ENCODE measurements at regions of chr3 and their contacts with region 1.

Region 1: GRCh38 chr3:139427283-139427993 is 38.0 kb upstream of the COPB2 start:
- DNase-seq: no peak
- ATAC-seq: peak; percentile 78
- H3K4me3 Mint-ChIP-seq: no peak overlapping the region
- H3K27ac Mint-ChIP-seq: no peak overlapping the region
- H3K4me1 Mint-ChIP-seq: no peaks in the 10 kb centered on the region
- H3K27me3 Mint-ChIP-seq: no peaks in the 10 kb centered on the region

Region 2: GRCh38 chr3:138923531-138923994 is 503.9 kb before region 1 on chr3:
- CTCF ChIA-PET with region 1: no interaction called
- POLR2A ChIA-PET with region 1: no interaction called
- intact Hi-C with region 1: no loop called
- DNase-seq: peak; percentile 92
- ATAC-seq: peak; percentile 98
- H3K4me3 Mint-ChIP-seq: no peak overlapping the region
- H3K27ac Mint-ChIP-seq: no peak overlapping the region
- H3K4me1 Mint-ChIP-seq: no peaks in the 10 kb centered on the region
- H3K27me3 Mint-ChIP-seq: peaks cover 2% of the 10 kb centered on the region

Region 3: DNA sequence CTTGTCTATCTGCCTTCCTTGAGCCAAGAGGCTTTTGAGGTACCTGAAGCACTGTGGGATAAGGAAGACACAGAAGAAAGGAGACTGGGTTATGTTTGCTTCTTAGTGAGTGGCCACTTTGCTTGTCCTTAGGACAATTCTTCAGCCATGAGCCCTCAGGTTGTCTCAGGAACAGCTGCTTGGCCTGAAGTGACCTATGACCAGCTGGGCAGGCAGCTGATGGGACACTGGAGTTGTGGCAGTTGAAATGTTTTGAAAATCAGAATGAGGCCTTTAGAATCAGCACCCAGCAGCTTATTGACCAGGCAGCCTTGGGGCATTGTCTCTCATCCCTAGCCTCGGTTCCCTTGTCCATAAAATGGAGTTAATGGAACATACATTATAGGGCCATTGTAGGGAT is 11.8 kb after region 1 on chr3:
- CTCF ChIA-PET with region 1: interaction called, 13 read pairs
- POLR2A ChIA-PET with region 1: no interaction called
- intact Hi-C with region 1: no loop called
- DNase-seq: no peak
- ATAC-seq: no peak
- H3K4me3 Mint-ChIP-seq: no peak overlapping the region
- H3K27ac Mint-ChIP-seq: no peak overlapping the region
- H3K4me1 Mint-ChIP-seq: no peaks in the 10 kb centered on the region
- H3K27me3 Mint-ChIP-seq: no peaks in the 10 kb centered on the region

Region 4: GRCh38 chr3:139519998-139520737 is 92.7 kb after region 1 on chr3:
- CTCF ChIA-PET with region 1: no interaction called
- POLR2A ChIA-PET with region 1: no interaction called
- intact Hi-C with region 1: loop called (anchors 2 to 5 kb)
- DNase-seq: peak; percentile 56
- ATAC-seq: peak; percentile 49
- H3K4me3 Mint-ChIP-seq: no peak overlapping the region
- H3K27ac Mint-ChIP-seq: no peak overlapping the region
- H3K4me1 Mint-ChIP-seq: no peaks in the 10 kb centered on the region
- H3K27me3 Mint-ChIP-seq: no peaks in the 10 kb centered on the region

Region 5: GRCh38 chr3:139561959-139562676 is 134.7 kb after region 1 on chr3:
- CTCF ChIA-PET with region 1: no interaction called
- POLR2A ChIA-PET with region 1: no interaction called
- intact Hi-C with region 1: loop called (anchors 1 to 5 kb)
- DNase-seq: peak; percentile 17
- ATAC-seq: no peak
- H3K4me3 Mint-ChIP-seq: no peak overlapping the region
- H3K27ac Mint-ChIP-seq: no peak overlapping the region
- H3K4me1 Mint-ChIP-seq: no peaks in the 10 kb centered on the region
- H3K27me3 Mint-ChIP-seq: no peaks in the 10 kb centered on the region

Region 6: GRCh38 chr3:139588450-139588849 is 161.0 kb after region 1 on chr3:
- CTCF ChIA-PET with region 1: no interaction called
- POLR2A ChIA-PET with region 1: no interaction called
- intact Hi-C with region 1: no loop called
- DNase-seq: peak; percentile 7
- ATAC-seq: no peak
- H3K4me3 Mint-ChIP-seq: no peak overlapping the region
- H3K27ac Mint-ChIP-seq: no peak overlapping the region
- H3K4me1 Mint-ChIP-seq: no peaks in the 10 kb centered on the region
- H3K27me3 Mint-ChIP-seq: no peaks in the 10 kb centered on the region

Region 7: GRCh38 chr3:139935016-139935865 is 507.8 kb after region 1 on chr3 and contains the start of gene CLSTN2:
- CTCF ChIA-PET with region 1: no interaction called
- POLR2A ChIA-PET with region 1: no interaction called
- intact Hi-C with region 1: loop called (anchors 2 to 10 kb)
- DNase-seq: peak; percentile 69
- ATAC-seq: peak; percentile 70
- H3K4me3 Mint-ChIP-seq: no peak within 1 kb of the TSS
- H3K27ac Mint-ChIP-seq: no peak within 1 kb of the TSS
- H3K4me1 Mint-ChIP-seq: peaks cover 9% of the 10 kb centered on the region
- H3K27me3 Mint-ChIP-seq: peaks cover 45% of the 10 kb centered on the region
- total RNA-seq, gene CLSTN2: not detected

Region 8: GRCh38 chr3:140736863-140737460 is 1309.5 kb after region 1 on chr3:
- CTCF ChIA-PET with region 1: no interaction called
- POLR2A ChIA-PET with region 1: no interaction called
- intact Hi-C with region 1: loop called in 1 of 2 experiments (anchors 2 kb)
- DNase-seq: peak; percentile 34
- ATAC-seq: no peak
- H3K4me3 Mint-ChIP-seq: no peak overlapping the region
- H3K27ac Mint-ChIP-seq: no peak overlapping the region
- H3K4me1 Mint-ChIP-seq: no peaks in the 10 kb centered on the region
- H3K27me3 Mint-ChIP-seq: peaks cover 5% of the 10 kb centered on the region

Region 9: DNA sequence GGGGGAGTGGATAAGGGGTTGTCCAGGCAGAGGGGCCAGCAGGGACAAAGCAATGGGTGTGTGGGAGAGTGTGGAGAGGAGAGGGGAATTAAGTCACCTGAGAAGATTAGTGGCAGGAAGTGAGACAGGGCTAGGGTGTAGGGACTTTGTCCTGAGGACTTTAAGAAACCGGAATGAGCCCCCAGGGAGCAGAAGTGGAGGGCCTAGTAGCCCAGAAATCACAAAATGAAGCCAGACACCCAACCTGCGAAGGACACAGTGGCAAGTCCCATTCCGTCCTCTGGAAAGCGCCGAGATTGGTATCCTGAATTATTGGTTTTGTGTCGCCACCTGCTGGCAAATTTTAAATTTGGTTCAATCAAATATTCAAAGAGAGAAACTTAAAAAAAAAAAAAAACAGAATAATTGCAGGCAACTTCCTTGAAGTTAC is 1436.2 kb after region 1 on chr3:
- CTCF ChIA-PET with region 1: interaction called, 10 read pairs
- POLR2A ChIA-PET with region 1: no interaction called
- intact Hi-C with region 1: loop called in 1 of 2 experiments (anchors 1 kb)
- DNase-seq: peak; percentile 68
- ATAC-seq: peak; percentile 30
- H3K4me3 Mint-ChIP-seq: no peak overlapping the region
- H3K27ac Mint-ChIP-seq: no peak overlapping the region
- H3K4me1 Mint-ChIP-seq: no peaks in the 10 kb centered on the region
- H3K27me3 Mint-ChIP-seq: peaks cover 6% of the 10 kb centered on the region